ENCODE measurements at regions of chr17 and their contacts with region 1.

Region 1: GRCh38 chr17:50397111-50397918 is at the start of gene LRRC59:
- DNase-seq: peak; percentile 95
- ATAC-seq: peak; percentile 100
- H3K4me3 Mint-ChIP-seq: peak within 1 kb of the TSS; percentile 88
- H3K27ac Mint-ChIP-seq: peak within 1 kb of the TSS; percentile 76
- H3K4me1 Mint-ChIP-seq: peaks cover 23% of the 10 kb centered on the region
- H3K27me3 Mint-ChIP-seq: no peaks in the 10 kb centered on the region
- CTCF ChIP-seq: peak; percentile 76
- total RNA-seq, gene LRRC59: 41.8 and 42.0 TPM in 2 replicates

Region 2: GRCh38 chr17:48908047-48908843 is 1489.1 kb before region 1 on chr17 and contains the start of gene UBE2Z:
- CTCF ChIA-PET with region 1: no interaction called
- POLR2A ChIA-PET with region 1: no interaction called
- intact Hi-C with region 1: loop called (anchors 5 kb)
- DNase-seq: peak; percentile 83
- ATAC-seq: peak; percentile 84
- H3K4me3 Mint-ChIP-seq: peak within 1 kb of the TSS; percentile 96
- H3K27ac Mint-ChIP-seq: peak within 1 kb of the TSS; percentile 99
- H3K4me1 Mint-ChIP-seq: peaks cover 51% of the 10 kb centered on the region
- H3K27me3 Mint-ChIP-seq: no peaks in the 10 kb centered on the region
- CTCF ChIP-seq: no peak
- total RNA-seq, gene UBE2Z: 121 and 154 TPM in 2 replicates

Region 3: GRCh38 chr17:50361561-50362480 is 35.5 kb before region 1 on chr17:
- CTCF ChIA-PET with region 1: interaction called, 22 read pairs
- POLR2A ChIA-PET with region 1: interaction called, 7 read pairs
- intact Hi-C with region 1: loop called (anchors 5 kb)
- DNase-seq: no peak
- ATAC-seq: peak; percentile 97
- H3K4me3 Mint-ChIP-seq: no peak overlapping the region
- H3K27ac Mint-ChIP-seq: peak overlapping the region; percentile 70
- H3K4me1 Mint-ChIP-seq: peaks cover 7% of the 10 kb centered on the region
- H3K27me3 Mint-ChIP-seq: no peaks in the 10 kb centered on the region
- CTCF ChIP-seq: peak; percentile 30

Region 4: DNA sequence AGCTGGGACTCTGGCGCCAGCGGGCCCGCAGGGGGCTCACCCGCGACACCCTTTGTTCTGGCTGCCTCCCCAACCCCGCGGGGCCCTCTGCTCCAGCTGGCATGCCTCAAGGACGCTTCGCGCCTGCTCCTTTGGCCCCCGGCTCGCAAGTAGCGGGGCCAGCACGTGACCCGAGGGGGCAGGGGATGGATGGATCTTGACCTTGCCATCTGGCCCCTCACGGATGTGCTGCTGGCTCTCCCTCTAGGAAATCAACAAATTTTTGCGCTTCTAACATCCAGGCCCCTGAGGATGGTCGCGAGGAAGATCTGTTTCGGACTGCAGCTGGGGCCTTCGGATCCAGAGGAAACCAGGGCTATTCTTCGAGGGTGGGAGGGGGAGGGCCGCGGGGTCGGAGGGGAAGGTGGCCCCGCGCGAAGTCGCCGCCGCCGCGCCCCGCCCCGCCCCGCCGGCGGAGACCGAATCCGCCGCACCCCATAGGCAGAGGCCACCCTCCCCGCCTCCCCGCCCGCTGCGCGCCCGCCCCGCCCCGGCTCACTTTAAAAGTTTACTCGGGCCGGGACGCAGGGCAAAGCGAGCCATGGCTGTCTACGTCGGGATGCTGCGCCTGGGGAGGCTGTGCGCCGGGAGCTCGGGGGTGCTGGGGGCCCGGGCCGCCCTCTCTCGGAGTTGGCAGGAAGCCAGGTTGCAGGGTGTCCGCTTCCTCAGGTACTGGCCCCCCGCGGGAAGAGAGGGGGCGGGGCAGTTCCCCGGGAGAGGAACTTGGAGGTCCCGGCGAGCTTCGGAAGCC is 28.6 kb after region 1 on chr17 and contains the start of gene ACSF2:
- CTCF ChIA-PET with region 1: interaction called, 29 read pairs
- POLR2A ChIA-PET with region 1: interaction called, 33 read pairs
- intact Hi-C with region 1: loop called (anchors 1 kb)
- DNase-seq: peak; percentile 65
- ATAC-seq: peak; percentile 82
- H3K4me3 Mint-ChIP-seq: peak within 1 kb of the TSS; percentile 88
- H3K27ac Mint-ChIP-seq: peak within 1 kb of the TSS; percentile 83
- H3K4me1 Mint-ChIP-seq: peaks cover 44% of the 10 kb centered on the region
- H3K27me3 Mint-ChIP-seq: no peaks in the 10 kb centered on the region
- CTCF ChIP-seq: no peak
- total RNA-seq, gene ACSF2: 16.4 and 17.9 TPM in 2 replicates

Region 5: DNA sequence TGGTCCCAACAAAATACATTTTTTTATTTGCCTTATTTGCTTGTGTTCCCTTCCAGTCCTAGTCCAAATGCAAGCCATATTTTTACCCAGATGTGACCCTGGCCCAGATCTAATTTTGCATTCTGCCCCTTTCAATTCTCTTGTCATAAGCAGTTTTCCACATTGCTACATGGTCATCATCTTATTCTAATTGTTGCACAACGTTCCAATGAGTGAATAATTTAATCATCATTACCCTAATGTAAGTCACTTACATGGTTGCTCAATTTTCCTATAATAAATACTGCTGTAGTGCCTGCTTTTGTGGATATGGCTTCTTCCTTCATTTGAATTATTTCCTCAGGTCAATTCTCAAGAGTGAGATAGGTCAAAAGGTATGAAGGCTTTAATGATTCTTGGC is 94.2 kb after region 1 on chr17:
- CTCF ChIA-PET with region 1: no interaction called
- POLR2A ChIA-PET with region 1: no interaction called
- intact Hi-C with region 1: no loop called
- DNase-seq: no peak
- ATAC-seq: no peak
- H3K4me3 Mint-ChIP-seq: no peak overlapping the region
- H3K27ac Mint-ChIP-seq: no peak overlapping the region
- H3K4me1 Mint-ChIP-seq: no peaks in the 10 kb centered on the region
- H3K27me3 Mint-ChIP-seq: peaks cover under 1% of the 10 kb centered on the region
- CTCF ChIP-seq: no peak

Region 6: GRCh38 chr17:50541716-50542688 is 144.7 kb after region 1 on chr17:
- CTCF ChIA-PET with region 1: no interaction called
- POLR2A ChIA-PET with region 1: interaction called, 11 read pairs
- intact Hi-C with region 1: no loop called
- DNase-seq: peak; percentile 92
- ATAC-seq: peak; percentile 86
- H3K4me3 Mint-ChIP-seq: peak overlapping the region; percentile 85
- H3K27ac Mint-ChIP-seq: peak overlapping the region; percentile 76
- H3K4me1 Mint-ChIP-seq: peaks cover 17% of the 10 kb centered on the region
- H3K27me3 Mint-ChIP-seq: peaks cover 7% of the 10 kb centered on the region
- CTCF ChIP-seq: no peak

Measured in activated B cell treated with CpG ODN at 0.5 μM for 24 hours (primary cell).